K562 (cell line): ENCODE measurements at regions of chr4 and their contacts with region 1.

Region 1: DNA sequence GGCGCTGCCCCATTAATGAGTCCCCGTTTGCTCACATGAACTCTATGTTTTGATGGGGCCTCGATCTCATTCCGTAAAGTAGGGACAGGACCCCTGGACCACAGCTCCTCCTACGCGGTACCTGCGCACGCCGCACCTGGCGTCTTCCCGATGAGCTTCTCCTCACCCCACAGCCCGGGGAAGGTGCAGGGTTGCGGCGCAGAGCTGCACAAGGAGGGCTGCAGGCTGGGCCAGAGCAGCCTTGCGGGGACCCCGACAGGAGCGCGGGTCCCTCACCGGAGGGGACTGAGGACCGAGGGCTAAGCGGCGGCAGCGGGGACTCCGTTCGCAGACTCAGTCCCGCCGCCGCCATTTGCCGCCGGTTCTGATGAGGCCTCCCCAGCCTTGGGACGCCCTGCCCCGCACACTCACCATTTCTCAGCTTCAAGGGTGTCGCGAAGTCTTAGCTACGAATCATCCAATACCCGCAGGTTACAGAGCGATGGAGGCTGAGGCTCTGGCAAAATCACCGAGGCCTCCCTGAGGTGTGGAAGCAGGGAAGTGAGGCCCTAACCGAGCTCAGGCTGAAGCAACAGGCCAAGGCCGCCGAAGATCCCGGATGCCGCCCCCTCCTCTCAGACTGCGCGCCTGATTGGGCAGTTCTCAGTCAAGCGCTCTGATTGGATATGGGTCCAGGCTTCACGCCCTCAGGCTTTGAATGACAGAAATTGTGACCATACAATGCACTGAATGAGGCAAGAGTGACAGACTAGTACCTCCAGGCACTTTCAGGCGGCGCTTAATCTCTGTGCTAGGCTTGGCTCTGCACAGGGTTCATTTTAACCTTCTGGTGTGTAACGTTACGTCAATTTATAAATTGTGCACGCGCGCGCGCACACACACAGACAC is 25.1 kb downstream of the ZNF721 start:
- DNase-seq: peak; percentile 97 to 99 (median 98)
- ATAC-seq: peak; percentile 100
- H3K4me3 ChIP-seq: peak overlapping the region; percentile 80
- H3K27ac ChIP-seq: peak overlapping the region; percentile 89
- H3K4me1 ChIP-seq: no peaks in the 10 kb centered on the region
- H3K27me3 ChIP-seq: no peaks in the 10 kb centered on the region
- CTCF ChIP-seq: no peak
- EP300 ChIP-seq: no peak
- POLR2A ChIP-seq: peak; percentile 96
- RAD21 ChIP-seq: no peak

Region 2: DNA sequence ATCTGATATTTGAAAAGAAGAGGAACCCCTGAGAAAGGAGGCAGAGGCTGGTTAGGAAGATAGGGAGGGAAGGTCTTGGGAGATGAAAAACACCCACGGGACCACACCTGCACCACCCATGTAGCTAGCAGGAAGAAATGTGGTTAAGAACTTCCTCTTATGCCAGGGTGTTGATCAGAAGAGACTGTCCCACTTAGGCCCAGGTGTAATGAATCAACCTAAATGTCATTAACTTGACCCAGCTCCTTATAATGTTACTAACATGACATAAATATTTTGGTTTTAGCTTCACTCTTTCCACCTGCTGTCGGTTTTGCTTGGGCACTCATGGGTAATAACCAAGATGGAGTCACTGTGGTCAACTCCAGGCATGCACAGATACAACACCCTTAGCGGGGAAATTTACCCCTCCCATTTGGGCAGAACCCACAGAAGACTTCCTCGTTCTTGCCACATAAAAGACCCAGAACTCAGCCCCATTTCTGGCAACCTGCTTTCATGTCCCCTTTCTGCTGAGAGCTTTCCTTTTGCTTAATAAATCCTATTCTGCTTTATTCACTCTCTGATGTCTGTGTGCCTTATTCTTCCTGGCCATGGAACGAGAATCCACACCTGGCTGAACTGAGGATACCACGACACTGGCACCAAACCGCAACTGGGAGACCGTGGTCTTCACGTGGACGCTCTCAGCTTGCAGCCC is 89.4 kb before region 1 on chr4:
- CTCF ChIA-PET with region 1: no interaction called
- POLR2A ChIA-PET with region 1: no interaction called
- in situ Hi-C with region 1: no loop called
- intact Hi-C with region 1: no loop called
- DNase-seq: no peak
- ATAC-seq: no peak
- H3K4me3 ChIP-seq: no peak overlapping the region
- H3K27ac ChIP-seq: no peak overlapping the region
- H3K4me1 ChIP-seq: peaks cover 0 to 4% of the 10 kb centered on the region in 2 experiments; a peak in 1 of 5 replicates
- H3K27me3 ChIP-seq: no peaks in the 10 kb centered on the region
- CTCF ChIP-seq: no peak
- EP300 ChIP-seq: no peak
- POLR2A ChIP-seq: no peak
- RAD21 ChIP-seq: no peak

Region 3: DNA sequence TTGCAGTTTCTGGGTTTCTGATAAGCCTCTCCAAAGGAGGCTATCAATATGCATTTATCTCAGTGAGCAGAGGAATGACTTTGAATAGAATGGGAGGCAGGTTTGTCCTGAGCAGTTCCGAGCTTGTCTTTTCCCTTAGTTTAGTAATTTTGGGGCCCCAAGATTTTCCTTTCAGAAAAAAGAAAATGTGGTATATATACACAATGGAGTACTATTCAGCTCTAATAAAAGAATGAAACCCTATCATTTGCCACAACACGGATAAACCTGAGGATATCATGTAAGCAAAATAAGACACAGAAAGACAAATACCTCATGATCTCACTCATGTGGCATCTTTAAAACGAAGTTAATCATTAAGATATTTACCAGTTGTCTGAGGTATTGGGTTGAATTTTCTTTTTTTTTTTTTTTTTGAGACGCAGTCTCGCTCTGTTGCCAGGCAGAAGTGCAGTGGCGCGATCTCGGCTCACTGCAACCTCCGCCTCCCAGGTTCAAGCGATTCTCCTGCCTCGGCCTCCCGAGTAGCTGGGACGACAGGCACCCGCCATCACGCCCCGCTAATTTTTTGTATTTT is 24.6 kb after region 1 on chr4:
- CTCF ChIA-PET with region 1: no interaction called
- POLR2A ChIA-PET with region 1: interaction called, 8 read pairs
- in situ Hi-C with region 1: no loop called
- intact Hi-C with region 1: loop called (anchors 2 kb)
- DNase-seq: no peak
- ATAC-seq: peak; percentile 31
- H3K4me3 ChIP-seq: peak overlapping the region; percentile 98
- H3K27ac ChIP-seq: peak overlapping the region; percentile 92
- H3K4me1 ChIP-seq: peaks cover 0 to 8% of the 10 kb centered on the region in 2 experiments; a peak in 3 of 5 replicates
- H3K27me3 ChIP-seq: no peaks in the 10 kb centered on the region
- CTCF ChIP-seq: no peak
- EP300 ChIP-seq: no peak
- POLR2A ChIP-seq: no peak
- RAD21 ChIP-seq: no peak